ENCODE measurements at regions of chr1 and their contacts with region 1.

Region 1: GRCh38 chr1:245797592-245798348 is 643.0 kb downstream of the KIF26B start:
- DNase-seq: peak; percentile 71
- ATAC-seq: peak; percentile 50; the same call in 1 of the 2 replicates
- H3K4me3 Mint-ChIP-seq: no peak overlapping the region
- H3K27ac Mint-ChIP-seq: no peak overlapping the region
- H3K4me1 Mint-ChIP-seq: no peaks in the 10 kb centered on the region
- H3K27me3 Mint-ChIP-seq: no peaks in the 10 kb centered on the region
- CTCF ChIP-seq: peak; percentile 76

Region 2: DNA sequence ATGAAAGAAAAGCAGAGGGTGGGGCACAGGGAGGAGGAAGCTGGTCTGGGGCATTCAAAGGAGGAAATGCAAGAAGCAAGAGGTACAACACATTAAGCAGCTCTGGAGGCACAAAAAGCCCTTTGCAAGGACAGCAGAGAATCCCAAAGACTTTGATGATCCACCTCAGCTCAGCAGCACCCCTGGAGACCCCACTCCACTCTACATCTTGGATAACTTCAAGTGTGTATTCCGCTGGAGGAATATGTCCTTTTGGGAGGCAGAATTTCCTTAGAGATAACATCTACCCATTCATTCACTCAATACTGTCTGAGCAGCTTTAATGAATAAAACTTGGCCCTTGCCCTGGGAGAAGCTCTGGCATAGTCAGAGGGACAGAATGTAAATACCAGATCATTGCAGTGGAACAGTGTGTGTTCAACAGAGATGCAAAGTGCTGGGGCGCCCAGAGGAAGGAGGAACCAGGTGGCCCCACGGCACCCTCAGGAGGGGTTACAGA is 43.3 kb before region 1 on chr1:
- CTCF ChIA-PET with region 1: no interaction called
- POLR2A ChIA-PET with region 1: no interaction called
- DNase-seq: no peak
- ATAC-seq: peak; percentile 86
- H3K4me3 Mint-ChIP-seq: no peak overlapping the region
- H3K27ac Mint-ChIP-seq: no peak overlapping the region
- H3K4me1 Mint-ChIP-seq: peaks cover 32% of the 10 kb centered on the region
- H3K27me3 Mint-ChIP-seq: no peaks in the 10 kb centered on the region
- CTCF ChIP-seq: no peak

Region 3: GRCh38 chr1:245810181-245810769 is 12.5 kb after region 1 on chr1:
- CTCF ChIA-PET with region 1: interaction called, 13 read pairs
- POLR2A ChIA-PET with region 1: no interaction called
- DNase-seq: no peak
- ATAC-seq: no peak
- H3K4me3 Mint-ChIP-seq: no peak overlapping the region
- H3K27ac Mint-ChIP-seq: no peak overlapping the region
- H3K4me1 Mint-ChIP-seq: peaks cover 21% of the 10 kb centered on the region
- H3K27me3 Mint-ChIP-seq: no peaks in the 10 kb centered on the region
- CTCF ChIP-seq: no peak

Measured in WTC11 (cell line).